Posterior cingulate gyrus (tissue), 11 donors: ENCODE measurements at regions of chr2 and their contacts with region 1.

Region 1: DNA sequence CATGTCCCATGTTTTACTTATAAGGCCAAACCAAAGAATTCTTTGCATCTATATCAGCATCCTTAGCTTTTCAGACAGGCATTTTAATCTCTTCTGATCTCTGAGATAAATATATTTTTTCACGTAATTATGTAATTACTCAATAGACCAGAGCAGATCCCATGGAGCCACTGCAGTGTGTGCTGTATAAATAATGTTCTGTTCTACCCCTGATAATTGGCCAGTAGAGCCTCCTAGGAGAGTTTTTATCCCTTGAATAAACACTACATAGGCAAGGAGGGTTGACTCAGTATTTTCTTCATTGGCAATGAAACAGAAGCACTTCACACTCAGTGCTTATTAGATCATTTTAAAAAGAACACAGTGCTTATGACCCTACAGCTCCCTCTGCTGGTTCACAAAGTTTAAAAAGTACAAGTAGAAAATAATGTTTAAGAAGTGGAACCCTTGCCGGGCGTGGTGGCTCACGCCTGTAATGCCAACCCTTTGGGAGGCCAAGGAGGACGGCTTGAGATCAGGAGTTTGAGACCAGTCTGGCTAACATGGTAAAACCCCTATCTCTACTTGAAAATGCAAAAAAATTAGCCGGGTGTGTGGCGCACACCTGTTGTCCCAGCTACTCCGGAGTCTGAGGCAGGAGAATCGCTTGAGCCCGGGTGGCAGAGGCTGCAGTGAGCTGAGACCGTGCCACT is 91.9 kb downstream of the PPP1R1C start:
- DNase-seq: peak in 2 of 10 donors; percentile 12 to 75

Region 2: DNA sequence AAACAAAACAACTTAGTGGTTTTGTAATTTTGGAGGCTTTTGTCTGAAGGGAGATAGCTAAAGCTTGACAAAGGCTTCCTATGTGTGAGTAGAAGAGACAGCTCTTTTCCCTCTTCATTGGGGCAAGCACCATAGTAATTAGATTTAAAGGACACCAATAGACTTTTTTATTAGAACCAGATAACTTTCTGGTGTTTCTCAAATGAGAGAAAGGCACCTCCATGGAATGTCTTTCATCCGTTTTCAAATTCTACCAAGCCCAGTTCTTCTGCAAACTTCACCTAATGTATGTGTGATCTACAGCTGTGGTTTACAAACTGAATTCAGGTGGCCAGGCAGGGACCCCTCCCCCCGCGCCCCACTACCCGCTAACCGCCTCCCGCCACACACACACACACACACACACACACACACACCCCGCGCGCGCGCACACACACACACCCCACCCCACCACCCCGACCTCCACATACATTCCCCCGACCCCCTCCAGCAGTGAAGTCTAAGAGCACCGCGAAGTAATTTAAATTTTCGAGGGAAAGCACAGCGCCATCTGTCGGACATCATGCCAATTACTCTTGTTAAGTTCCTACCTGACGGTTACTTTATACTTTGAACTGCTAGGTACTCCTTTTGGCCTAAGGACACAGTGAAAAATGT is 123.6 kb before region 1 on chr2:
- intact Hi-C with region 1: loop called (anchors 10 kb)
- DNase-seq: peak in 5 of 10 donors; percentile 38 to 80 (median 52)

Region 3: GRCh38 chr2:182197529-182197928 is 119.9 kb after region 1 on chr2:
- intact Hi-C with region 1: no loop called
- DNase-seq: no peak

Region 4: GRCh38 chr2:182345384-182345783 is 267.8 kb after region 1 on chr2:
- intact Hi-C with region 1: no loop called
- DNase-seq: no peak